AG04449 (cell line): ENCODE measurements at regions of chr3 and their contacts with region 1.

Region 1: DNA sequence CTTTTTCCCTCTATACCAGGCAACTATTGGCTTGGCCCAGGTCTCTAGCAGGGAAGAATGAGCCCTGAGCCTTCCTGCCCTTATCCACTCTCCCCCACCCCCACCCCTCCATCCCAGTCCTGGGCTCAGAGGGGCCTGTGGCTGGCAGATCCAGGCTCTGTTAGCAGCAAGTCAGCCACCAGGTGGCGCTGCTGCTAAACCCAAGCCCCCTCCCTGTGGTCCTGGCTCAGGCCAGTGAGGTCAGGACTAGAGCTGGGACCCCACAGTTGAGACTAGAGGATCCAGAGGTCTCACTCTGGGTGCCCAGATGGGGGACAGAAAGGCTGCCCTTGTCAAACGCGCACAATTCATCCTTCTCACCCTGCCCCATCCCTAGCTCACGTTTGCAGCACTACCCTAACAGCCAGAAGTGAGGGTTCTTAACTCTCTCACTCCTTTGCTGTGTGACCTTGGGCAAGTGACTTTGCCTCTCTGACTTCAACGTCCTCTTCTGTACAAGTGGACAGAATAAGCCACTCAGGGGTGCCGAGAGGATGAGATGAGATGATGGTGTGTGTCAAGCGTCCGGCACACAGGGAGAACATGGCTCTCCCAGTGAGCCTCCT is 46.8 kb upstream of the SLC6A1 start:
- DNase-seq: no peak
- H3K4me3 ChIP-seq: no peak overlapping the region
- CTCF ChIP-seq: peak; percentile 85

Region 2: DNA sequence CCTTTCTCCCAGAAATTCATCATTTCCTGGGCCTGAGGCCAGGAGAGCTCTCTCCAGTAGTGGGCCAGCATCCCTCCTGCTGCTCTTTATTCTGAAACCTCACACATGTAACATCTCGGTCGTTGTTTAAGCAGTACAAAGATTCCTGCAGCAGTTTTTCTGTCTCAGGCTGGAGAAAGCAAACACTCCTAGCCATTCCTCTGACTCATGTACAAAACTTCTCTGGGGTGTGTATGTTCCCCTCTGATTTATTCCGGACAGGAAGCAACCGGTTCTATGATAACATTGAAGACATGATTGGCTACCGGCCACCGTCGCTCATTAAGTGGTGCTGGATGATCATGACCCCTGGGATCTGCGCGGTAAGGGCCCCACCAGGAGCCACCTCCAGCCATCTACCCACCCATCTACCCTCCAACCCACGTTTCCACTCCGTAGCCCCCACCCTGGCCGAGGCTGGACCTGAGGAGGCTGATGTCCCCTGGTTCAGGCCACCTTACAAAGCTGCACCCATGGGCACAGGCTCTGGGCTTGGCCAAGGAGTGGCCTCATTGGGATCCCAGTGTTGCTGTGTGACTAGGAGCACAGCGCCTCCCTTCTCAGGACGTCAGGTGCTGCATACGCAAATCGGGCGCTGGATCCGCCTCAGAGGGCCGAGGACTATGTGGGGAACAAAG is 11.8 kb before region 1 on chr3:
- CTCF ChIA-PET with region 1: interaction called, 17 read pairs
- POLR2A ChIA-PET with region 1: no interaction called
- DNase-seq: peak; percentile 34
- H3K4me3 ChIP-seq: no peak overlapping the region
- CTCF ChIP-seq: no peak

Region 3: DNA sequence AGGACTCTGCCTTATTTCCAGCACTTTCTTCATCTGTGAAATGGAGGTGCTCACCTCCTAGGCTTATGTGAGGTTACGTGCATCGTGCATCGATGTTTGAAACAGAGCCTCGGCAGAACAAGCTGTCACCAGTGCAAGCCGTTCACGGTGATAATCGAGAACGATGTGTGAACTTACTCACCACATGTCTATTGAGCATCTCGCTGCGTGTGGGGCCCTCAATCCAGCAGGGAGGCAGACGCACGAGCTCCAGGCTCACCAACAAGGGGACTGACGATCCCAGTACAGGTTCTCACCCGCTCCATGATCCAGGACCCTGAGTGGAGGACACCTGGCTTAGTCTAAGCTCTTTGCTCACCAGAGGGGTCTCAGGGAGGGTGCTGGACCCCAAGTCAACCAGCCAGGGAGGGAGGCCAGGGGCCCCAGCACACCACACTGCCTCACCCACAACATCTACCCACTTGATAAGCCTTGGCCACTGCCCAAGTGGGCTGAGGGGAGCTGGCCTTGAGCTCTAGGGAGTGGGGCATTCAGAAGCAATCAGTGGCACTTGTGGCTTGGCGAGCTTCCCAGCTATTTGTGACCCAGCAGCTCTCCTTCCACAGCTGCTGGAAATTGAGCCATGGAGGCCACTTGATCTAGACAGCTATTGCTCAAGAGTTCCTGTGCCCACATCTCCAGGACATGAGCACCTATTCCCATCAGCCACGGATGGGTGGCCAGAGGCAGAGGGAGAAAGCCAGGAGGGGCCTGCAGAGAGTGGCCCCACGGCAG is 12.4 kb after region 1 on chr3:
- CTCF ChIA-PET with region 1: interaction called, 21 read pairs
- POLR2A ChIA-PET with region 1: no interaction called
- DNase-seq: no peak
- H3K4me3 ChIP-seq: no peak overlapping the region
- CTCF ChIP-seq: no peak

Region 4: DNA sequence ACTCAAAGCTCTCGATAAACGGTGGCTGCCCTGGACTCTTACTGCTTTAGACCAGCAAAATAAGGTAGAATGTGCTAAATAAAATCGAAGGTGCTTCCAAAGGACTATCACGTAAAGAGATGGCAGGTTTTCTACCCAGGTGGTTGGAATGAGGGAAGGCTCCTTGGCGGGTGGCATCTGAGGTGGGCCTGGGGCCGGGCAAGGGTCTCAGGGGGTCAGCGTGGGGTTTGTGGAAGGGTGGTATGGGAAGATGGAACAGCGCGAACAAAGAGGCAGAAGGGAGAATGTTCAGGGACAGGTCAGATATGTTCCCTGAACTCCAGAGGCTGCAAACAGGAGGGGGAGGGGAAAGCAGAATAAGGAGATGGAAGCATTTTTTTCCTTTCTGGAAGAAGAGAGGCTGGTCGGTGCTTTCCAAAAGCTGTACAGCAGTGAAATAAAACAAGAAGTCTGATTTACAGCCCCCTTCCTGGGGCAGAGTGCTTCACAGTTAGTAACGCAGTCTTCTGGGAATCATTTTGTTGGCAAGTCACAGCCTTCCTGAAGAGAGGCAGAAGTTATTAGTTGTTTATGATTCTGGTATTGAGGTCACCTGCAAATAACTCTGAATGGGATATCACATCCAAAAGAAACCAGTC is 268.1 kb after region 1 on chr3:
- CTCF ChIA-PET with region 1: no interaction called
- POLR2A ChIA-PET with region 1: no interaction called
- DNase-seq: no peak
- H3K4me3 ChIP-seq: no peak overlapping the region
- CTCF ChIP-seq: no peak